Astrocyte of the cerebellum (primary cell): ENCODE measurements at regions of chr4 and their contacts with region 1.

Region 1: GRCh38 chr4:184392748-184393334 is 81.5 kb downstream of the IRF2 start:
- DNase-seq: no peak
- H3K4me3 ChIP-seq: no peak overlapping the region
- CTCF ChIP-seq: no peak

Region 2: DNA sequence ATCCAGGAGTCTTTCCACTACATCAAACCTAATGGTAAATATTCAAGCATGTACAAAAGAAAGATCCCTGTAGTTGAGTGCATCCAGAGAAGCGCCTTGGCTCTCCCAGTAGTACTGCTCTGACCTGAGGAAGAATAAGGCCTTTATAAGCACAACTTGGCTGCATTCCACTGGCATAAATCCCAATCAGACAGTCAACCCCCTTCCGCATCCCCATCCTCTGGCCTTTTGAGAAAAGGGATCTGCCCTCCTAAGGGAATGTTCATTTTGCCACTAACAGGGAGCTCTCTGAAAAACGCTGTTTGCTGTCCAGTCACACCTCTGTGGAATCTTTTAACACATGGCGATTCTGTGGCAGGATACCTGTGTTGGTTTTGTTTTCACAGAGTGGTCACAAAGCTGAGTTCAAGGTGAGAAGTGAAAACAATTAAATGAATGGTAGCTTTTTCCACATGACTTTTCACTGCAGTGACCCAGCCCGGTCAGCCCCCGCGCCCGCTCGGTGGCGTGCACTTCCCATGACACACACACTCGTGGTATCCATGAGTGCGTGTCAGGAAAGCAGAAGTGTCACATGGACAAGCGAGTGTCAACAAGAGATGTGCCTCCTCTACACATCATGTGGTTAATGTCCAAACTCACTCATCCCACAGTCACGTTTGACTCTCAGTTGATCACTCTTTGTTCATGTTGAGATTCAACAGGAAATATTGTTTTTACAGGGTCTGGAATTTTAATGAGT is 63.0 kb before region 1 on chr4:
- in situ Hi-C with region 1: no loop called
- DNase-seq: no peak
- H3K4me3 ChIP-seq: no peak overlapping the region
- CTCF ChIP-seq: no peak

Region 3: GRCh38 chr4:184457535-184458249 is 64.9 kb after region 1 on chr4:
- in situ Hi-C with region 1: loop called (anchors 5 kb)
- DNase-seq: no peak
- H3K4me3 ChIP-seq: no peak overlapping the region
- CTCF ChIP-seq: no peak